ENCODE measurements at regions of chr5 and their contacts with region 1.

Region 1: GRCh38 chr5:139422307-139422893 is 16.9 kb downstream of the DNAJC18 start:
- DNase-seq: peak; percentile 74
- H3K4me3 ChIP-seq: peak overlapping the region in 1 of 2 experiments; percentile 4; a peak in 1 of 4 replicates
- H3K27ac ChIP-seq: peak overlapping the region in 1 of 2 experiments; percentile 42; a peak in 1 of 4 replicates
- H3K4me1 ChIP-seq: peaks cover 8 to 9% of the 10 kb centered on the region in 2 experiments; a peak in 3 of 4 replicates
- H3K27me3 ChIP-seq: no peaks in the 10 kb centered on the region
- CTCF ChIP-seq: peak; percentile 96
- EP300 ChIP-seq: no peak
- RAD21 ChIP-seq: peak; percentile 97

Region 2: GRCh38 chr5:139403787-139404483 is 18.5 kb before region 1 on chr5 and contains the start of gene SPATA24:
- CTCF ChIA-PET with region 1: interaction called, 39 read pairs
- POLR2A ChIA-PET with region 1: no interaction called
- DNase-seq: peak; percentile 95
- H3K4me3 ChIP-seq: peak within 1 kb of the TSS; percentile 57 to 66
- H3K27ac ChIP-seq: peak within 1 kb of the TSS; percentile 94 to 95
- H3K4me1 ChIP-seq: peaks cover 0 to 13% of the 10 kb centered on the region in 2 experiments; a peak in 1 of 4 replicates
- H3K27me3 ChIP-seq: no peaks in the 10 kb centered on the region
- CTCF ChIP-seq: no peak
- EP300 ChIP-seq: no peak
- RAD21 ChIP-seq: no peak
- polyA plus RNA-seq, gene SPATA24: 7.6 and 10.8 TPM in 2 replicates

Region 3: DNA sequence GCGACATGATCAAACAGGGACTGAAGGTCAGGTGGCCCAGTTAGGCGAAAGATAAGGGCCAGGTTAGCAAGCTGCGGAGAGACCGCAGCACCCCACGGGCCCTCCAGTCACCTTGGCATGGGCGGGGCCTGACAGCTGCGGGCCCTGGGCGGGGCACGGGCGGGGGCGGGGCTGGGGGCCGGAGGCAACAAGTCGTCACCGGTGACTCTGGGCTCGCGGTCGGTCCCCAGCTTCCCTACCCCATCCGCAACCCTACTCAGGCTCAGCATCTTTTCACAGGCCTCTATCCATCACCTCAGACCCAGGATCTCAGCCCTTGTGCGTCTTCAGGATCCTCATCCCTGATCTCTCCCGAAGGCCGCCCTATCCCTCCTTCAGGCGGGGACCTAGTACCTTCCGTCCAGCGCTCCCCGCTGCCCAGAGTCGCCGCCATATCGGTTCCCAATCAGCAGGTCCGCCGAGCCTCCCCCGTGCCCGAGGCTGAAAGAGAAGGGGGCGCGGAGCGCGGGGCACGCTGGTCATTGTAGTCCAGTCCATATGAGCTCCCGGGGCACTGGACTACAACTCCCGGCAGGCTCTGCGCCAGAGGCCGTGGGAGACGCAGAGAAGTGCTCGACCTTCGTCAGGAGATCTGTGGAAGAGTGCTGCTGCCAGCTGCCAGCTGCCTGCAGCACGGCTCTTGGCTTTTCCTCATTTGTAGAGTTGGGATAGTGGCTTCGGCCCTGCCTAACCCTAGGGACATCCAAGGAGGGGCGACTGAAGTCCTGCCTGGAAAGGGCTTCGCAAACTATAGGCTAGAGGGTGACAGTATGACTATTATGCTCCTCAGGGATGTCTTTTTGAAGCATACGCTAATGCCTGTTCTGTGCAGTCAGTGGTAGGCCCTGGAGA is 16.9 kb after region 1 on chr5 and contains the start of gene DNAJC18:
- CTCF ChIA-PET with region 1: interaction called, 22 read pairs
- POLR2A ChIA-PET with region 1: interaction called, 3 read pairs
- DNase-seq: peak; percentile 95
- H3K4me3 ChIP-seq: peak within 1 kb of the TSS; percentile 69 to 90
- H3K27ac ChIP-seq: peak within 1 kb of the TSS; percentile 88 to 89
- H3K4me1 ChIP-seq: peaks cover 10% of the 10 kb centered on the region in 2 experiments; a peak in 3 of 4 replicates
- H3K27me3 ChIP-seq: no peaks in the 10 kb centered on the region
- CTCF ChIP-seq: no peak
- EP300 ChIP-seq: no peak
- RAD21 ChIP-seq: 0 out of 2 replicates have a peak, but pooled peaks have one; percentile 4
- polyA plus RNA-seq, gene DNAJC18: 7.4 and 10.3 TPM in 2 replicates

Region 4: DNA sequence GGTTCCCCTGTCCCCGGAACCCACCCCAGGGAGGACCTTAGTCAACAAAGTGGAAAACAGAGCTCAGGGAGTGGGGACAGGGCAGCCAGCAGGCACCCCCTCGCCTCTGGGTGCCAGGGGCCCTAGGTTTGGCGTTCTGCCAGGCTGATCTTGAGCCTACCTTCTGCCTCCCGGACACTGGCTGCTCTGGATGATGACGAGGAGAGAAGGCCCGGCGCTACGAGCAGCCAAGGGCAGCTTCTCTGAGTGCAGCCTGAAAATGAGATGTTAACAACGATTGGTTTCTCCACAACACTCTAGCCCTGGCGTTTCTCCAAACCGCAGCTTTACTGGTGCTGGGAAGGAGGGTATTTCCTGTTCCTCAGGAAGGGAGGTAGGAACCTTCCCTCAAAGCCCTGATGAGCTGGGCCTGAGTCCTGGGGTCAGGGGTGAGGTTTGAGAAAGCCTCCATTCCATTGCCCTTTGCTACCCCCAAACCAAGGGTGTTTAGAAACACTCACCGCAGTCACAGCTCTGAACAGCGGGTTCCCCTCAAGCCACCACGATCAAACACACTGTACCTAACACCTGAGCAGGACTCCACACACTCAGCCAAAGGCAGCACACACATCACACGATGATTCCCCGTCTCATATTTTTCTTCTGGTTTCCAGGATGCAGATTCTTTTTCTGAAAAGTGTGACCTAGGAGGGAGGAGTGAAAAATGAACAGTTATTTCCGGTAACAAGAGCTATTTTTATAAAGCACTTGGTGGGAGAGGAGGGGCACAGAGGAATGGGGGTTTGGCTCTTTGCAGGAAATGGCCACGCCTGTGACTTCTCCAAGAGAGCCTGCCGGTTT is 59.9 kb after region 1 on chr5 and contains the start of gene STING1:
- CTCF ChIA-PET with region 1: interaction called, 11 read pairs
- POLR2A ChIA-PET with region 1: no interaction called
- DNase-seq: peak; percentile 66
- H3K4me3 ChIP-seq: peak within 1 kb of the TSS; percentile 50 to 69
- H3K27ac ChIP-seq: peak within 1 kb of the TSS; percentile 91 to 100
- H3K4me1 ChIP-seq: peaks cover 14% of the 10 kb centered on the region in 2 experiments; a peak in 2 of 4 replicates
- H3K27me3 ChIP-seq: no peaks in the 10 kb centered on the region
- CTCF ChIP-seq: no peak
- EP300 ChIP-seq: peak; percentile 22 to 70; a peak in 1 of 4 replicates
- RAD21 ChIP-seq: no peak
- polyA plus RNA-seq, gene STING1: 98.4 and 119 TPM in 2 replicates

Region 5: DNA sequence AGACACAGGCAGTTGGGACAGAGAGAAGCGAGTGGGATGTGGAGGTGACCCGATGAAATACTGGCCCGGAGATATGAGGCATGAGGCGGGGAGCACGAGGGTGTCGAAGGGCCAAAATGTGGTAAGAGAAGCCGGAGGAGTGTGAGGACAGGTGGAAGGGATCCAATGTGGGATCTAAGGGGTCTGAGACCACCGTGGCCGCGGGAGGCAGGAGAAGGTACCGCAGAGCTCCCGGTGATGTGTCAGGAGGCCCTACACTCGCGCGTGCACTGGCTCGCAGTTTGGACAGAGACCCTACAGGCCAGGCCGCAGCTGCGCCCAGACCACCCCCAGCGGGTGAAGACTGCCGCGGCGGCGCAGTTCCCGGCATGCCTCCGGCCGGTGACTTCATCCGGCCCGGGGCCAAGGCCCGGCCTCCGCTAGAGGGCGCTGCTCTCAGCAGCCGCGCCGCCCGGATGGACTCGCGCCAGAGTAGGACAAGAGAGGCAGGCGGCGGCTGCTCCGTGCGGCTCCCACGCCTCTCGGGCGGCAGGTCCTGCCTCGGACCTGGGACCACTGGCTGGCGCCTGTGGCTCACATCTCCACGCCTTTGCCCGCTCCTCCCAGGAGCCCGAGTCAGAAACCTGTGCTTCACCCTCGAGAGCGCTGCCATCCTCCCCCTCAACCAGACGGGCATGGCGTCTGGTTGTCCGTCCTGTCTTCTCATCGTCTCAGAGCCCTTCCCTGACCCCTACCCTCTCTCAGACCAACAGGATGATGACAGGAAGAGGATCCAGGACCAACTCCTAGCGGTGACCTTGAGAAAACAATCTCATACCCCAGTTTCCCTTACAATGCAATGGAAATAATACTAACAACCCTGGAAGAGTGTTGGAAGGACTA is 95.5 kb after region 1 on chr5:
- CTCF ChIA-PET with region 1: interaction called, 324 read pairs
- POLR2A ChIA-PET with region 1: interaction called, 7 read pairs
- DNase-seq: peak; percentile 97
- H3K4me3 ChIP-seq: peak overlapping the region; percentile 40 to 60
- H3K27ac ChIP-seq: peak overlapping the region; percentile 65 to 87
- H3K4me1 ChIP-seq: peaks cover 3 to 8% of the 10 kb centered on the region in 2 experiments; a peak in 1 of 4 replicates
- H3K27me3 ChIP-seq: no peaks in the 10 kb centered on the region
- CTCF ChIP-seq: peak; percentile 79
- EP300 ChIP-seq: peak in 1 of 2 experiments; percentile 48; a peak in 1 of 4 replicates
- RAD21 ChIP-seq: peak; percentile 61